Activated CD4-positive, alpha-beta memory T cell treated with anti-CD3 and anti-CD28 coated beads for 36 hours (primary cell): ENCODE measurements at regions of chr5 and their contacts with region 1.

Region 1: DNA sequence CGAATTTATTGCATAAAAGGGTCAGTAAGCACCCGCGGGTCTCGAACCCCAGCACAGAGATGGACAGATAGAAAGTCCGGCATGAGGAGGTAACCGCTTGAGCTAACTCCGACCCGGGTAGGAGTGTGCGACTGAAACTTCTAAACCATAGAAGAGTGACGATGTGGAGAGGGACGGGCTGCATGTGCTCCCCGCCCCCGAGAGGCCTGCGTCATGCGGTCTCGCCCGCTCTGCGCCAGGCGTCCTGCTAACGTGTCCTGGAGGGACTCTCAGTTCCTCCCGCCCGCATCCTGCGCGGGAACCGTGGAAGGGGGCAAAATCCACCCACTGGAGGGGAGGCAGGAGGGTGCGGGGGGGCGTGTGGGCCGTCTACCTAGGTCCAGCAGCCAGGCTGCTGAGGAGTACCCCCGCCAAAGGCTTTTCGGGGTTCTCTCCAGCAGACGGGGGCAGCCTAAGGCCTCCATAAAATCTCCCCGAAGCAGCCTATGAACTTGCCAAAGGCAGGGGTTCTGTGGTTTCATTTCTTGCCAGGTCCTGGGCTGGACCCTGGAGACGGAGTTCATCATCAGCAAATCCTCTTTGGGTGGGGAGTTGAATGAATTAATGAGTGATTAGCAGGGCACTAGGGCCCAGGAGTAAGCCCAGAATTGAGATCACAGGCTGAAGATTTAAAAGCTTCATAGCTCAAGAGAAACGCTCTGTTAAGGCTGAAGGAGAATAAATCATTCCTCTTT is 51.9 kb downstream of the TGFBI start:
- DNase-seq: peak; percentile 85
- H3K4me3 Mint-ChIP-seq: peak overlapping the region; percentile 56
- H3K27ac Mint-ChIP-seq: peak overlapping the region; percentile 59
- H3K4me1 Mint-ChIP-seq: peaks cover 9% of the 10 kb centered on the region
- H3K27me3 Mint-ChIP-seq: peaks cover 33% of the 10 kb centered on the region

Region 2: DNA sequence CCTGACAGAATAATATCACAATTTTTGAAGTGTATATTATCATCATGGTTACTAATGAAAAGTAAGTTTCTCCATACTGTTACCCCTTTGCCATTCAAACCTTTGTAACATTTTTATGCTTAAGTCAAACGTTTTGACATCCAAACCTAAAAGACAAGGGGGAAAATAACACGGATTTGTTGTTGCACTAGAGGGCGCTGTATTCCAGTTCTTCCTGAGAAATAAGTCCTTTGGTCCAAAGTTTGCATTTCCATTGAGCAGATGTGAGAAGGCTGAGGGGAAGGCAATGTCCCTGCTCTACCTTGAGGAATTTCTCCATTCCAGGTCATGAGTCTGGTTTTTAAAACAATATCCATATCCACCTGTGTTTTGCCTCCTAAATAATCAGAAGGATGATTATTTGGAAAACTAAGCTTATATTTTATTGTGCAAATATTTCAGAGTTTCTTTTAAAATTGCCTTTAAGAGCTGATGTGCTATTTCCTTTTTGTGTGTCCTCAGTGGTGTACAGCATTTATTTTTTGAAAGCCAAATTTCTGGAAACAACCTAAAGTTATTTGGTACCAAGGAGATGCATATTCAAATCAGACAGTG is 135.6 kb before region 1 on chr5:
- CTCF ChIA-PET with region 1: interaction called, 38 read pairs
- POLR2A ChIA-PET with region 1: no interaction called
- intact Hi-C with region 1: loop called (anchors 1 kb)
- DNase-seq: peak; percentile 19
- H3K4me3 Mint-ChIP-seq: no peak overlapping the region
- H3K27ac Mint-ChIP-seq: no peak overlapping the region
- H3K4me1 Mint-ChIP-seq: no peaks in the 10 kb centered on the region
- H3K27me3 Mint-ChIP-seq: peaks cover 14% of the 10 kb centered on the region

Region 3: DNA sequence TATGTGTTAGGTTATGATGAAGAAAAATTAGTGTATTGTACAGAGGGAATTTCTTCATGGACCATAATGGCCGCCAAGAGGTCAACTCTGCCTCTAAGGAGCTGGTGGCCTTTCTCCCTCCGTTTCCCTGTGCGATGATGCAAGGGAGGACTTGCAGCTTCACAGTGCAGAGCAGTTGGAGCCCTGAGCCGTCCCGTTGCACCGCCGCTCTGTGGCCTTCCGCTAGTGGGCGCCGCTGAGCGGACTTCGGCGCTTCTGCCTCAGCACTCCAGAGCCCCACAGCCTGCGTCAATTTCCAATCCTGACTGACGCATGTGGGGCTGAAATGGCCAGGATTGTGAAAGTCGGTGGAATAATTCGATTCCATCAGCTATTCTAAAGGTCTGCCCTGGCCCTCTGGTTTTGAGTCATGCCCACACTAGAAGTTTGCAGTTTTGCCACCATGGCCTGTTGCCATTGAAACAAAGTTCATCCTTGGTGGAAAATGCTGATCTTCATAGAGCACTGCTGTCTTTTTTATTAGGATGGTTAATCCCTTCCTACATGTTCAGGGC is 103.2 kb before region 1 on chr5:
- CTCF ChIA-PET with region 1: interaction called, 8 read pairs
- POLR2A ChIA-PET with region 1: no interaction called
- intact Hi-C with region 1: loop called (anchors 1 kb)
- DNase-seq: peak; percentile 73
- H3K4me3 Mint-ChIP-seq: no peak overlapping the region
- H3K27ac Mint-ChIP-seq: no peak overlapping the region
- H3K4me1 Mint-ChIP-seq: no peaks in the 10 kb centered on the region
- H3K27me3 Mint-ChIP-seq: peaks cover 36% of the 10 kb centered on the region

Region 4: GRCh38 chr5:136037001-136037705 is 43.5 kb before region 1 on chr5:
- CTCF ChIA-PET with region 1: interaction called, 4 read pairs
- POLR2A ChIA-PET with region 1: no interaction called
- intact Hi-C with region 1: loop called (anchors 1 kb)
- DNase-seq: peak; percentile 82
- H3K4me3 Mint-ChIP-seq: no peak overlapping the region
- H3K27ac Mint-ChIP-seq: peak overlapping the region; percentile 71
- H3K4me1 Mint-ChIP-seq: peaks cover 28% of the 10 kb centered on the region
- H3K27me3 Mint-ChIP-seq: no peaks in the 10 kb centered on the region

Region 5: GRCh38 chr5:136099870-136100269 is 19.2 kb after region 1 on chr5:
- CTCF ChIA-PET with region 1: interaction called, 12 read pairs
- POLR2A ChIA-PET with region 1: no interaction called
- intact Hi-C with region 1: no loop called
- DNase-seq: no peak
- H3K4me3 Mint-ChIP-seq: no peak overlapping the region
- H3K27ac Mint-ChIP-seq: no peak overlapping the region
- H3K4me1 Mint-ChIP-seq: no peaks in the 10 kb centered on the region
- H3K27me3 Mint-ChIP-seq: peaks cover 6% of the 10 kb centered on the region

Region 6: GRCh38 chr5:136132557-136133221 is 52.0 kb after region 1 on chr5 and contains the start of gene SMAD5:
- CTCF ChIA-PET with region 1: interaction called, 5 read pairs
- POLR2A ChIA-PET with region 1: no interaction called
- intact Hi-C with region 1: loop called (anchors 2 kb)
- DNase-seq: peak; percentile 86
- H3K4me3 Mint-ChIP-seq: peak within 1 kb of the TSS; percentile 82
- H3K27ac Mint-ChIP-seq: peak within 1 kb of the TSS; percentile 51
- H3K4me1 Mint-ChIP-seq: peaks cover 25% of the 10 kb centered on the region
- H3K27me3 Mint-ChIP-seq: peaks cover 28% of the 10 kb centered on the region
- total RNA-seq, gene SMAD5: 9.6 to 10.9 TPM

Region 7: DNA sequence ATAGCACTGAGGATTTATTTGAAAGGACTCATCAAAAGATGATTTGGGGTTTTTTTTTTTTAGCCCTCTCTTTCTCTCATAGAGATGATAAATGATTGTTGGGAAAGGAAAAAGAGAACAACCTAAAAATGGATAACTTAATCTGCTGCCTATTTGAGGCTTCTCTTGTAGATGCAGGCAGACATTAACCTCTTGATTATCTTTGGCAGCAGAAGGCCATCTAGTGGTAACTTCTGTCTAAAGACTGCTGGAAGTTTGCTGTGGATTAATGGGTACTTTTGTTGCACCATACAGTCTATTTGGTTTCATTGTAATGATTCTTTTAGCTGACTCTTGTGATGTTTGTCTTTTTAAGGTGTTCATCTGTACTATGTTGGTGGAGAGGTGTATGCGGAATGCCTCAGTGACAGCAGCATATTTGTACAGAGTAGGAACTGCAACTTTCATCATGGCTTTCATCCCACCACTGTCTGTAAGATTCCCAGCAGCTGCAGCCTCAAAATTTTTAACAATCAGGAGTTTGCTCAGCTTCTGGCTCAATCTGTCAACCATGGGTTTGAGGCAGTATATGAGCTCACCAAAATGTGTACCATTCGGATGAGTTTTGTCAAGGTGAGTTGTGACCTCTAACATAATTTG is 93.5 kb after region 1 on chr5:
- CTCF ChIA-PET with region 1: interaction called, 3 read pairs
- POLR2A ChIA-PET with region 1: no interaction called
- intact Hi-C with region 1: loop called (anchors 2 kb)
- DNase-seq: no peak
- H3K4me3 Mint-ChIP-seq: no peak overlapping the region
- H3K27ac Mint-ChIP-seq: no peak overlapping the region
- H3K4me1 Mint-ChIP-seq: no peaks in the 10 kb centered on the region
- H3K27me3 Mint-ChIP-seq: no peaks in the 10 kb centered on the region